ENCODE measurements at regions of chr9 and their contacts with region 1.

Region 1: GRCh38 chr9:130235897-130236668 is 29.5 kb upstream of the HMCN2 start:
- DNase-seq: peak; percentile 36 to 86 (median 68)
- ATAC-seq: peak; percentile 36 to 82 (median 74)
- H3K4me3 ChIP-seq: no peak overlapping the region
- H3K27ac ChIP-seq: no peak overlapping the region
- H3K4me1 ChIP-seq: no peaks in the 10 kb centered on the region
- H3K27me3 ChIP-seq: no peaks in the 10 kb centered on the region
- CTCF ChIP-seq: peak; percentile 98 to 99 (median 98)

Region 2: GRCh38 chr9:129884220-129885017 is 351.7 kb before region 1 on chr9:
- intact Hi-C with region 1: loop called in 1 of 3 experiments (anchors 10 kb)
- DNase-seq: peak; percentile 88 to 95 (median 90)
- ATAC-seq: peak; percentile 85 to 91 (median 87)
- H3K4me3 ChIP-seq: peak overlapping the region in 3 of 4 donors; percentile 5 to 53 (median 50)
- H3K27ac ChIP-seq: peak overlapping the region; percentile 23 to 74 (median 68)
- H3K4me1 ChIP-seq: peaks cover 4 to 8% (median 6%) of the 10 kb centered on the region in 3 donors
- H3K27me3 ChIP-seq: no peaks in the 10 kb centered on the region
- CTCF ChIP-seq: no peak

Region 3: DNA sequence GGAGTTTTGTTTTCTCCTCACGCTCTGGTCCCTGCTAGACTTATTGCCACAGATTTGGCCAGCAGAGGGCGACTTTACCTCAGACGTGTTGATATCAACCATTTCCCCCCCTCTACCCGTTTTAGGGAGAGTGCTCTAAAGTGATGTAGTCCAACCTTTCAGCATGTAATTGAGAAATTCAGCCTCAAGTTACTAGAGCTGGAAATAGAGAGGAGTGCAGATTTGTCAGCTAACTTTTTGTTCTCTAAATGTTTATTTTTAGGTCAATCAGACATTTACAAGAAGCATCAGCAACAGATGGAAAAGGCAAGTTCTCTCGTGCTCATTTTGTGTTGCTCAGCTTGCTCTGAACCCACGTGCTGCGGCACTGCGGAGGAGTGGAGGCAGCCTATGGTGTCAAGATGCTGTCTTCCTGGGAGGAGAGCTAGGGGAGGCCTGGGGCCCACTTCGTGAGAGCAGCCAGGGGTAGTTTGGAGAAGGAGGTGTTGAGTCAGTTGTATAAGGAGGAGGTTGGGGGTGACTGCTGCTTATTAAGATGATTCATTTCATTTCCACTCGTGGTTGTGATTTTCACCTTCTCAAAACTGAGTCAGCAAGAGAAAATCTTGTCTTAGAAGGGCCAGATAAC is 128.7 kb before region 1 on chr9:
- intact Hi-C with region 1: loop called in 2 of 3 experiments (anchors 5 kb)
- DNase-seq: peak; percentile 53 to 88 (median 73)
- ATAC-seq: peak; percentile 69 to 96 (median 92)
- H3K4me3 ChIP-seq: no peak overlapping the region
- H3K27ac ChIP-seq: no peak overlapping the region
- H3K4me1 ChIP-seq: no peaks in the 10 kb centered on the region
- H3K27me3 ChIP-seq: no peaks in the 10 kb centered on the region
- CTCF ChIP-seq: peak; percentile 45 to 70 (median 62)

Region 4: GRCh38 chr9:130150779-130151382 is 85.2 kb before region 1 on chr9:
- intact Hi-C with region 1: loop called in 1 of 3 experiments (anchors 5 kb)
- DNase-seq: no peak
- ATAC-seq: no peak
- H3K4me3 ChIP-seq: no peak overlapping the region
- H3K27ac ChIP-seq: no peak overlapping the region
- H3K4me1 ChIP-seq: no peaks in the 10 kb centered on the region
- H3K27me3 ChIP-seq: no peaks in the 10 kb centered on the region
- CTCF ChIP-seq: no peak

Region 5: GRCh38 chr9:130167927-130168326 is 68.2 kb before region 1 on chr9:
- intact Hi-C with region 1: loop called in 1 of 3 experiments (anchors 5 kb)
- DNase-seq: no peak
- ATAC-seq: no peak
- H3K4me3 ChIP-seq: no peak overlapping the region
- H3K27ac ChIP-seq: no peak overlapping the region
- H3K4me1 ChIP-seq: no peaks in the 10 kb centered on the region
- H3K27me3 ChIP-seq: no peaks in the 10 kb centered on the region
- CTCF ChIP-seq: no peak

Region 6: GRCh38 chr9:130298663-130299279 is 62.7 kb after region 1 on chr9:
- intact Hi-C with region 1: no loop called
- DNase-seq: peak in 1 of 6 donors; percentile 23
- ATAC-seq: peak in 1 of 4 donors; percentile 38
- H3K4me3 ChIP-seq: no peak overlapping the region
- H3K27ac ChIP-seq: no peak overlapping the region
- H3K4me1 ChIP-seq: no peaks in the 10 kb centered on the region
- H3K27me3 ChIP-seq: no peaks in the 10 kb centered on the region
- CTCF ChIP-seq: no peak

Measured in pancreas (tissue), 10 donors.